Aorta (tissue), 5 donors: ENCODE measurements at regions of chr6 and their contacts with region 1.

Region 1: GRCh38 chr6:142946181-142946923 is 1.4 kb upstream of the HIVEP2 start:
- DNase-seq: peak; percentile 99
- ATAC-seq: peak; percentile 92
- H3K4me3 ChIP-seq: peak overlapping the region; percentile 69 to 98
- H3K27ac ChIP-seq: peak overlapping the region; percentile 96 to 99
- H3K4me1 ChIP-seq: no peaks in the 10 kb centered on the region
- H3K27me3 ChIP-seq: no peaks in the 10 kb centered on the region

Region 2: DNA sequence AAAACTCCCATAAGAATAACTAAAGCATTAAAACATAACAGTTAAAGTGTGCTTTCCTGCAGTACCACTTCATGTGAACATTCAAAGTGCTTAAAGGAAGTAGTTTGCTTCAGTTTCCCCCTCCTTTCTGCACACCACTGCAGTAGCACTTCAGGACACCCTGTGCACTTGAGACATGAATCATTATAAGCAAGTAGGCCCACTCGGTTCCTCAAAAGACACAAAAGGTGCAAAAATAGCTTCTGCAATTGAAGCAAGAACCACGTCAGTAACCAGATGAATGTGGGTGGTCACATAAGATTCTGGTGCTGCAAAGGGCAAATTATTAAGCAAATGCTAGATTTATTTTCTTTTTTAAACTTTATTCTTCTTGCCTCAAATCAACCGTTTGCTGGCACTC is 162.0 kb before region 1 on chr6:
- intact Hi-C with region 1: loop called in 1 of 2 experiments (anchors 5 kb)
- DNase-seq: no peak
- ATAC-seq: no peak
- H3K4me3 ChIP-seq: no peak overlapping the region
- H3K27ac ChIP-seq: no peak overlapping the region
- H3K4me1 ChIP-seq: peaks cover 0 to 2% of the 10 kb centered on the region in 2 donors
- H3K27me3 ChIP-seq: no peaks in the 10 kb centered on the region

Region 3: GRCh38 chr6:142845624-142846458 is 100.5 kb before region 1 on chr6:
- intact Hi-C with region 1: loop called in 1 of 2 experiments (anchors 2 kb)
- DNase-seq: peak; percentile 83 to 92
- ATAC-seq: peak; percentile 81
- H3K4me3 ChIP-seq: no peak overlapping the region
- H3K27ac ChIP-seq: peak overlapping the region in 1 of 2 donors; percentile 42
- H3K4me1 ChIP-seq: peaks cover 7 to 9% of the 10 kb centered on the region in 2 donors
- H3K27me3 ChIP-seq: no peaks in the 10 kb centered on the region

Region 4: DNA sequence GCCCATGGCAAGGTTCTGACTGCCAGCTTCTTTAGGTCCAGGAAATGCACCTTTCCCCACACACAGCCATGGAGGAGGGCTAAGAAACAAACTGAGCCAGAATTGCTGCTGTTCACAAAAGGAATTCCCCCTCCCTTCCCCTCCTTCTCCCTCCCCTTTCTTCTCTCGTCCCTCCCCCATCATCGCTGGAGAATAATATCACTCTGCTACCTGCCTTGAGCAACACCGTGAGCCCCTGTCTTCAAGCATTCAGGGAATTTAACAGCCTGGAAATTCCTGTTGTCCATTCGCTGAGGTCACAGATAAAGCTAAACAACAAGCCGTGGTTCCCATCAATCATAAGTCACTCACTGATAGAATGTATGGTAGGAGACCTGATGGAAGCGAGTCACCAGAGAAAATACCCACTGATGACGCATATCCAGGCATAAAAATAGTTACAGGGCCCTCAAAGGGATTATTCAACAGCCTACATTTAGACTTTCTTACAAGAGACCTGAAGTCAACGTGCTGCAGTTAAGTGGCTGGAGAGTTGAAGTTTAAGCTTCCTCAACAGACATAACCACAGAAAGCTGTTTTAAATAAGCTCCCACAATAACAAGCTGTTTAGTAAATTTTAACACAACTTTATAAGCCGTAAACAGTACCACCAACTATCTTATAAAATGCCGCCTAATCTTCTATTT is 61.0 kb before region 1 on chr6:
- intact Hi-C with region 1: loop called (anchors 1 kb)
- DNase-seq: no peak
- ATAC-seq: peak; percentile 83
- H3K4me3 ChIP-seq: peak overlapping the region; percentile 27 to 32
- H3K27ac ChIP-seq: peak overlapping the region; percentile 7 to 32
- H3K4me1 ChIP-seq: peaks cover 0 to 5% of the 10 kb centered on the region in 2 donors
- H3K27me3 ChIP-seq: no peaks in the 10 kb centered on the region

Region 5: GRCh38 chr6:143060354-143060805 is 114.0 kb after region 1 on chr6:
- intact Hi-C with region 1: loop called in 1 of 2 experiments (anchors 5 kb)
- DNase-seq: peak; percentile 92 to 95
- ATAC-seq: peak; percentile 94
- H3K4me3 ChIP-seq: peak overlapping the region; percentile 69 to 77
- H3K27ac ChIP-seq: peak overlapping the region; percentile 78 to 80
- H3K4me1 ChIP-seq: no peaks in the 10 kb centered on the region
- H3K27me3 ChIP-seq: no peaks in the 10 kb centered on the region